Activated T-helper 2 cell treated with anti-CD3 and anti-CD28 coated beads, Interferon-gamma antibody, Interleukin-2, Interleukin-4, amounts not matched to agents 10 μg/mL and 5 μg/mL and 100 μg/mL, durations not matched to agents 14 hours and 24 hours and 36 hours (primary cell): ENCODE measurements at regions of chr15 and their contacts with region 1.

Region 1: DNA sequence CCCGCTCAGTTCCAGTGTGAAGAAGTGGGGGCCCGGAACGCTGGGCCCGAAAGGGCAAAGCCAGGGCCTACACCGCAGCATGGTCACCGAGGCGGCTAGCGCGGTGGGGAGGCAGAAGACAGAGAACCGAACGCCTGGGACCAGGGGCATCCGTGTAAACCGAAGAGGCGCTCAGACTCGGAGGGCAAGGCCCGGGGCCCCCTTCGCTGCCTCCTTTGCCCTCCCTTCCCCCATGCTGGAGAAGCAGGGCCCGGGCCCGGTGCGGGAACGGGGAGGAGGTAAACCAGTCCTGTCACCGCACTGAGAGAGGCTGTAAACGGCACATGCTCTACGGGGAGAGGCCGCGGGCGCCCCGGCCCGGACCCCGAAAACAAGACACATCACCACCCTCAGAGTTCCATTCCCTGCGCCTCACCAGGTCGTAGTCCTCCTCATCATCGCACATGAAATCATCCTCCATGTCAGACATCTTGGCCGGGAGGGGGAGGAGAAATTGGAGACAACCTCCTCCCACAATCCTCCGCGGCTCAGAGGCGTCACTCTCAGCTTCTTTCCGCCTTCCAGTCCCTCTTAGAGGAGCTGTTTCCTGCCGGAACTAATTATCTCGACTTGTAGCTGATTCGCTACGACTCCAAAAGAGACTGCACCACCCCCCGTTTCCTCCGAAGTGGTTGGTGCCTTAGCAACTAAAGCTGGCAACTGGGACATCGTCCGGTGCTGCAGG is at the start of gene COPS2:
- DNase-seq: peak; percentile 94
- H3K4me3 Mint-ChIP-seq: peak within 1 kb of the TSS; percentile 100
- H3K27ac Mint-ChIP-seq: peak within 1 kb of the TSS; percentile 99
- H3K4me1 Mint-ChIP-seq: peaks cover 44% of the 10 kb centered on the region
- H3K27me3 Mint-ChIP-seq: no peaks in the 10 kb centered on the region
- total RNA-seq, gene COPS2: 85.1 and 94.7 TPM in 2 replicates

Region 2: GRCh38 chr15:48810414-48811317 is 344.6 kb before region 1 on chr15 and contains the start of gene CEP152:
- intact Hi-C with region 1: loop called (anchors 2 kb)
- DNase-seq: peak; percentile 99
- H3K4me3 Mint-ChIP-seq: peak within 1 kb of the TSS; percentile 97
- H3K27ac Mint-ChIP-seq: peak within 1 kb of the TSS; percentile 97
- H3K4me1 Mint-ChIP-seq: peaks cover 31% of the 10 kb centered on the region
- H3K27me3 Mint-ChIP-seq: peaks cover 11% of the 10 kb centered on the region
- total RNA-seq, gene CEP152: 26.2 and 29.2 TPM in 2 replicates

Region 3: GRCh38 chr15:49046220-49047102 is 108.8 kb before region 1 on chr15 and contains the start of gene SECISBP2L:
- intact Hi-C with region 1: loop called (anchors 5 kb)
- DNase-seq: peak; percentile 88
- H3K4me3 Mint-ChIP-seq: peak within 1 kb of the TSS; percentile 97
- H3K27ac Mint-ChIP-seq: peak within 1 kb of the TSS; percentile 83
- H3K4me1 Mint-ChIP-seq: peaks cover 27% of the 10 kb centered on the region
- H3K27me3 Mint-ChIP-seq: no peaks in the 10 kb centered on the region
- total RNA-seq, gene SECISBP2L: 33.5 and 37.0 TPM in 2 replicates

Region 4: GRCh38 chr15:49060710-49061505 is 94.4 kb before region 1 on chr15:
- intact Hi-C with region 1: no loop called
- DNase-seq: no peak
- H3K4me3 Mint-ChIP-seq: no peak overlapping the region
- H3K27ac Mint-ChIP-seq: no peak overlapping the region
- H3K4me1 Mint-ChIP-seq: peaks cover 9% of the 10 kb centered on the region
- H3K27me3 Mint-ChIP-seq: no peaks in the 10 kb centered on the region

Region 5: DNA sequence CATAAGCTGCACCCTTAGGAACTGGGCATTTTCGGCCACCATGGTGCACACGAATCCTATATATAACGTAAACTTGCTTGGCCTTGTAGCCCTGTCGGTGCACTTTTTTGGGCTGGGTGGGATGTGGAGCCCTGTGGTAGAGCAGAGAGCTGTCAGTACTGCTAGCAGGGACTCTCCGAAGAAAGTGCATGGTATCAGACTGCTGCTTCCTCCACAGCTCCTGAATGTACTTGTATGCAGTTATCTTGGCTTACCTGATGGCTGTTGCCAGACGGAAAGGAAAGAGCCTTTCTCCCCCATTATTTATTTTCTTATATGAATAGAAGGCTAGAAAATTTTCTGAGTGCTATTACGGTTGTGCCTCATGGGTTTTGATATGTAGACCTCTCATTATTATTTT is 23.2 kb after region 1 on chr15:
- intact Hi-C with region 1: no loop called
- DNase-seq: no peak
- H3K4me3 Mint-ChIP-seq: no peak overlapping the region
- H3K27ac Mint-ChIP-seq: no peak overlapping the region
- H3K4me1 Mint-ChIP-seq: peaks cover 20% of the 10 kb centered on the region
- H3K27me3 Mint-ChIP-seq: no peaks in the 10 kb centered on the region

Region 6: GRCh38 chr15:49421991-49422390 is 266.7 kb after region 1 on chr15:
- intact Hi-C with region 1: loop called (anchors 5 kb)
- DNase-seq: no peak
- H3K4me3 Mint-ChIP-seq: no peak overlapping the region
- H3K27ac Mint-ChIP-seq: peak overlapping the region; percentile 0
- H3K4me1 Mint-ChIP-seq: peaks cover 4% of the 10 kb centered on the region
- H3K27me3 Mint-ChIP-seq: peaks cover 17% of the 10 kb centered on the region

Region 7: GRCh38 chr15:50145451-50145872 is 990.2 kb after region 1 on chr15:
- intact Hi-C with region 1: loop called (anchors 10 kb)
- DNase-seq: no peak
- H3K4me3 Mint-ChIP-seq: no peak overlapping the region
- H3K27ac Mint-ChIP-seq: no peak overlapping the region
- H3K4me1 Mint-ChIP-seq: peaks cover 43% of the 10 kb centered on the region
- H3K27me3 Mint-ChIP-seq: no peaks in the 10 kb centered on the region